KBM-7 (cell line): ENCODE measurements at regions of chr19 and their contacts with region 1.

Region 1: DNA sequence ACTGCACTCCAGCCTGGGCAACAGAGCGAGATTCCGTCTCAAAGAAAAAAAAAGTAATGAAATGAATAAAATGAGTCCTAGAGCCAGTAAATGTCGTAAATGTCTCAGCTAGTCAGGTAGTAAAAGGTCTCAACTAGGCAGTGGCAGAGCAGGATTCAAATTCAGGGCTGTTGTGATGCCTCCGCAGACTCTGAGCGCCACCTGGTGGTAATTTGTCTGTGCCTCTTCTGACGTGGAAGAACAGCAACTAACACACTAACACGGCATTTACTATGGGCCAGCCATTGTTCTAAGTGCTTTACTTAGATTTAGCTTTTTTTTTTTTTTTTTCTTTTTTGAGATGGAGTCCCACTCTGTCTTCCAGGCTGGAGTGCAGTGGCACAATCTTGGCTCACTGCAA is 30.2 kb downstream of the CYP2F1 start:
- DNase-seq: peak; percentile 87

Region 2: DNA sequence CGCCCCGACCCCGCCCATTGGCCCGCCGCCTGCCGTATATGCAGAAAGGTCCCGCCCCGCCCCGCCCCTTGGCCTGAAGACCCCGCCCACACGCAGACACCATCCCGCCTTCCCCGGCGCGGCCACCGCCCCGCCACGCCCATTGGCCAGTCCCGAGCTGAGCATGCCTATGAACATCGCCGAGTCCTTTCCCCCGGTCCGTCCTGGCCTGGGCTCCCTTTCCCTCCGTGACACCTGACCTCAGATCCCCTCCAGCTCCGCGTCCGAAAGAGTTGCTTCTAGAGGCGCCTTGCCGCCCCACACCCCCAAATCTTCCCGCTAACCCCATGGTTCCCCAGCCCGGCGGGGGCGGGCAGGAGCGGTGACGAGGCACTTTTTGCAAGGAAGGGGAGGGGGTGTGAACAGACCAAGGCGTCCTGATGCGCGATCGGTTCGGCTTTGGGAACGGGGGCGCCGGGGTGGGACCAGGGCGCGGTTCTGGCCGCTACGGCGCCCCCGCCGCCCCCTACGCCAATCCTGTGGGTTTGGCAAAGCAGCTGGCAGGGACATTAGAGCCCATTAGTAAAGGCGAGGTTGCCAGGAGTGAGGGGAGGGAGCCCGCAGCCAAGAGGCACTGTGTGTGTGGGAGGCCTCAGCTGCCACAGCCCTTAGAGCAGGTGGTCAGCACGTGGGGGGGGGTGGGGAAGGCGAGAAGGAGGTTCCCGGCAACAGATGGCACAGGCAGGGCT is 453.5 kb before region 1 on chr19:
- in situ Hi-C with region 1: loop called (anchors 25 kb)
- DNase-seq: peak; percentile 83

Region 3: DNA sequence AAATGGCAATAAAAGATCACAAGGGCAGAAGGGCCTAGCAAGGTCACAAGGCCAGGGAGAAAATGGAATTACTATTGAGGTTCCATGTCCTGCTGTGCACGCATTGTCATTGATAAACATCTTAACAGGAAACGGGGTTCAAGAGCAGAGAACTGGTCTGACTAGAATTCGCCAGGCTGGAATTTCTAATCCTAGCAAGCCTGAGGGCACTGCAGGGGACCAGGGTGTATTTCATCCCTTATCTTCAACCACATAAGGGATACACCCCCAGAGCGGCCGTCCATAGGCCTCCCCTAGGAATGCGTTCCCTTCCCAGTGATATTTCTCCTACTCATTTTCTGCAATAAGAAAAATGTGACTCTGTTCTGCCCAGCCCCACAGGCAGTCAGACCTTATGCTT is 318.1 kb after region 1 on chr19:
- in situ Hi-C with region 1: no loop called
- DNase-seq: no peak

Region 4: GRCh38 chr19:41480336-41480735 is 335.9 kb after region 1 on chr19:
- in situ Hi-C with region 1: no loop called
- DNase-seq: no peak